Activated T-helper 2 cell treated with anti-CD3 and anti-CD28 coated beads, Interferon-gamma antibody, Interleukin-2, Interleukin-4, amounts not matched to agents 10 μg/mL and 5 μg/mL and 100 μg/mL, durations not matched to agents 14 hours and 24 hours and 36 hours (primary cell): ENCODE measurements at regions of chr13 and their contacts with region 1.

Region 1: GRCh38 chr13:44577236-44578066 is 1.3 kb upstream of the TSC22D1 start:
- DNase-seq: peak; percentile 91
- H3K4me3 Mint-ChIP-seq: peak overlapping the region; percentile 88
- H3K27ac Mint-ChIP-seq: peak overlapping the region; percentile 79
- H3K4me1 Mint-ChIP-seq: peaks cover 18% of the 10 kb centered on the region
- H3K27me3 Mint-ChIP-seq: peaks cover 44% of the 10 kb centered on the region

Region 2: DNA sequence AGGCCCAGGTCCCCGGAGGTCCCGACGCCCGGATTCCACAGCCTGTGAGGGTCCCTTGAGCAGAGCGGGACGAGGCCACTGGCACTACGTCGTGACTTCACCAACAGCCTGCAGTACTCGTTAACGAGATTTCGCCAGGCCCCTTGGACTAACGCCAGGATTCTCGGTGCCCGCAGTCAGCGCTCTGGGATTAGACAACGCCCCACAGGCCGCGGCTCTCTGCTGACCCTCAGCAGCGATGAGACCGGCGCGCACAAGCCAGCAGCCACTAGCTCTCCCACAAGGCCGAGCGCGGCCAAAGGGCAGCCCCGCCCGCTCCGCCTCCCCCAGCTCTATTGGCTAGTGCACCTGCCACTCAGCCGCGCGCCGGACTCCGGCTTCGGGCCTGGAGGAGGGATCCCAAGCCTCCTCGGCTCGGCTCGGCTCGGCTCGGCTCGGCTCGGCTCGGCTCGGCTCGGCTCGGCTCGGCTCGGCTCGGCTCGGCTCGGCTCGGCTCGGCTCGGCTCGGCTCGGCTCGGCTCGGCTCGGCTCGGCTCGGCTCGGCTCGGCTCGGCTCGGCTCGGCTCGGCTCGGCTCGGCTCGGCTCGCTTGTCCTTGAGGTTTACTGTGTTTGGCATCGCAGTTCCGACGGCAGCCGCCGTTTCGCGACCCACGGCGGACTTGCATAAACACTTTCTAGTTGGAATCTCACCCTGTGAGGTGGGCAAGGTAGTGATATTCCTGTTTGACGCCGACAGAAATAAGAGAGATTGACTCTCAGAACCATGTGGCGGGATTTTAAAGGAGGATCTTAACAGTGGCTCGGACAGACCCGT is 435.5 kb before region 1 on chr13:
- intact Hi-C with region 1: loop called (anchors 5 kb)
- DNase-seq: peak; percentile 93
- H3K4me3 Mint-ChIP-seq: peak overlapping the region; percentile 84
- H3K27ac Mint-ChIP-seq: peak overlapping the region; percentile 67
- H3K4me1 Mint-ChIP-seq: peaks cover 24% of the 10 kb centered on the region
- H3K27me3 Mint-ChIP-seq: peaks cover 51% of the 10 kb centered on the region

Region 3: GRCh38 chr13:44648392-44649103 is 71.1 kb after region 1 on chr13:
- intact Hi-C with region 1: loop called (anchors 1 kb)
- DNase-seq: no peak
- H3K4me3 Mint-ChIP-seq: no peak overlapping the region
- H3K27ac Mint-ChIP-seq: peak overlapping the region; percentile 25
- H3K4me1 Mint-ChIP-seq: peaks cover 21% of the 10 kb centered on the region
- H3K27me3 Mint-ChIP-seq: peaks cover 14% of the 10 kb centered on the region

Region 4: GRCh38 chr13:44768239-44768638 is 190.8 kb after region 1 on chr13:
- intact Hi-C with region 1: loop called (anchors 5 kb)
- DNase-seq: peak; percentile 16
- H3K4me3 Mint-ChIP-seq: no peak overlapping the region
- H3K27ac Mint-ChIP-seq: peak overlapping the region; percentile 52
- H3K4me1 Mint-ChIP-seq: peaks cover 27% of the 10 kb centered on the region
- H3K27me3 Mint-ChIP-seq: peaks cover 6% of the 10 kb centered on the region

Region 5: GRCh38 chr13:44988973-44989817 is 411.7 kb after region 1 on chr13 and contains the starts of genes GPALPP1 and NUFIP1:
- intact Hi-C with region 1: loop called (anchors 1 kb)
- DNase-seq: peak; percentile 88
- H3K4me3 Mint-ChIP-seq: peak within 1 kb of the TSS; percentile 95
- H3K27ac Mint-ChIP-seq: peak within 1 kb of the TSS; percentile 95
- H3K4me1 Mint-ChIP-seq: peaks cover 43% of the 10 kb centered on the region
- H3K27me3 Mint-ChIP-seq: no peaks in the 10 kb centered on the region
- total RNA-seq, gene GPALPP1: 29.1 and 32.9 TPM in 2 replicates
- total RNA-seq, gene NUFIP1: 9.5 and 10.3 TPM in 2 replicates